ENCODE measurements at regions of chr11 and their contacts with region 1.

Region 1: DNA sequence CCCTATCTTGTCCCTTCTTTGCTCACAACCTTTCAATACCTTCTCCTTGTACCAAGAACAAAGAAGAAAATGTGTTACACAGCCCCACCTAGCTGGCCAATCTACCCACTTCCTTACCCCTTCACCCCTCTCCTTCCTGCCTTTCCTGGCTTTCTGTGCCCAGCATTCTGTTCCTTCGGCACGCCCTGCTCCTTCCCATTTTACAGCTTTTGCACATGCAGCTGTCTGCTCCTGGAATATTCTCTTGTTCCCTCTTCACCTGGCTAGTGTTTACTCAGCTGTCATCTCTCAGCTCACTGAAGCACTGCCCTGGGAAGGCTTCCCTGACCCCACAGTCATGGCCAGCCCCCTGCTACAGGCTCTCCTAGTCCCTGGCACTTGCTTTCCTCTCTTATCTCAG is 30.7 kb downstream of the SERPINH1 start:
- DNase-seq: no peak

Region 2: DNA sequence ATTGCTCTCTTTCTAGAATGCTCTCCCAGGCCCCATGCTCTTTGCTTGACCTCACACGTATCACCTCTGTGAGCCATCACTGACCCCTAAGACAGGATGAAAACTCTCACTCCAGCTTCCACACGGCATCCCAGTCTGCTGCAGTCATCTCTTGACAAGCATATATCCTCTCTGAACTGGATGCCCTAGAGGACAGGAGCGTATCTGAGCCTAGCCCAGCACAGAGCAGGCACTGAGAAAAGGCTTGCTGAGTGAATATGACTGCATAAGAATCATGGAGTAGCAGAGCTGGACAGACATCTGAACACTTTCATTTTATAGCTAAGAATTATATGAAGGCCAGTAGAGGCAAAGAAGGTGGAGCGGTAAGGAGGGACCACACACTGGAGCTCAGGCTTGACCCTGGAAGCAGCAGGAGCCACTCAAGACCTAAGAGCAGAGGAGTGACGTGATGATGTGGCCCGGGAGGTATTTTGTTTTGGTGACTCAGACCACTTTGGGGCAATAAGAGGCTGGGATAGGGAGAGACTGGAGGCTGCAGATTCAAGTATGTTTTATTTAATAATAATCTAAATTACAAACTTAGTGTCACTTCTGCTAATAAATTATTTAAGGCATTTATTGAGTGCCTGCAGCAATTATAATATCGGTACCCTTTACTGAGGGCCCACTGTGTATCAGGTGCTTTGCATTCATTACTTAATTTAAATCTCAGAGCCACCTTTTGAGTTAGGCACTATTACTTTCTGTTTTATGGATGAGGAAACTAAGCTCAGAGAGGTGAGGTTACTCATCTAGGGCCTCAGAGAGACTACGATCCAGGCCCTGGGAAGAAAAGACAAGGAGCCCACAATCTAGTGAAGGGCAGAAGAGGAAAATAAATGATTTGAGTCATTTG is 33.5 kb after region 1 on chr11:
- intact Hi-C with region 1: loop called in 1 of 2 experiments (anchors 1 kb)
- DNase-seq: no peak